Lower leg skin (tissue), 4 donors: ENCODE measurements at regions of chr9 and their contacts with region 1.

Region 1: DNA sequence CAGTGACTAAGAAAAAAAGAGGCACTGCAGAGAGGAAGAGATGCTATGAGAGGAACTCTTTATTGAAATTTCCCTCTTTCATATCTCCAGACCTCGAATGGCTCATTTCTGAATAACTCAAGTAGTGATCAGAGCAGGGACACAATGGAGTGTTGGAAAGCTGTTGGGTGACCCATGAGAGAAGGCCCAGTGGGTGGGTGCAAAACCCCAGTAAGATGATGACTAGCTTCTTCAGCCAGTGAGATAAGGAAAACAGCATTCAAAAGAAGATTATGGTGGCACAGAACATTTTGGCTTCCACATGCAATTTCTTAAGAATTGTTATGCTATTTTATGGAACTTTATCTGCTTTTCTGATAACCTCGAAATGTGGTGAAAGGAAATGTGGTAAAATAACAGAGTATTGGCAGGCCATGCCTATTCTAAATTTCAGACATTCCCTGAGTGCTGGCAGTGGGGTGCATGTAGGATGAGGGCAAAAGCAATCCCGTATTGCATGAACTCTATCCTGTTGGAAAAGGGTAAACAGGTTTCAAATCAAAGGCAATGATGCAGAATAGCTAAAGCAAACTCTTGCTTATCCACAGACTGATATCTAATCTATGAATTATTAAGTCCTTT is 128.0 kb upstream of the KLF9 start:
- DNase-seq: no peak
- H3K4me3 ChIP-seq: no peak overlapping the region
- CTCF ChIP-seq: no peak
- POLR2A ChIP-seq: no peak

Region 2: DNA sequence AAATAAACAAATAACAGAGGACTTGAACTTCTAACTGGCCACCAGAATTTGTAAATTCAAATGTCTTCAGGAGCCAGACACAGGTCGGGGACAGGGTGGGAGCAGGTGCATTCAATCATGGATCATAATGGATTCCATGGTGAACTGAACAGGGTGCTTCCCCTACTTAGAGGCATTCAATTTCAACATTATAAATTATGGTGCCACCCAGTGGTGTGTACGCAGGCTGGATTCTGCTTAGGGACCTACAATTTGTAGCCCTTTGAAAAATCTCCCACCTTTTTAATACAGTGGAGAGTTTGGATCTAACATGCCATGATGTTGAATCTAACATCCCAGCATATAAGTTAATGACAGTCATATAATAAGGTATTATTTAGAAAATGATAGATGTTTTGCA is 150.2 kb before region 1 on chr9:
- intact Hi-C with region 1: no loop called
- DNase-seq: no peak
- H3K4me3 ChIP-seq: no peak overlapping the region
- CTCF ChIP-seq: no peak
- POLR2A ChIP-seq: no peak

Region 3: GRCh38 chr9:70494221-70494620 is 48.2 kb before region 1 on chr9:
- intact Hi-C with region 1: loop called (anchors 10 kb)
- DNase-seq: no peak
- H3K4me3 ChIP-seq: no peak overlapping the region
- CTCF ChIP-seq: no peak
- POLR2A ChIP-seq: no peak